GM13976 (cell line): ENCODE measurements at regions of chr1 and their contacts with region 1.

Region 1: GRCh38 chr1:194295685-194296084 is 1109.3 kb upstream of the B3GALT2 start:
- DNase-seq: peak; percentile 20
- CTCF ChIP-seq: peak; percentile 73

Region 2: GRCh38 chr1:193406901-193407300 is 888.8 kb before region 1 on chr1:
- in situ Hi-C with region 1: loop called (anchors 25 kb)
- DNase-seq: peak; percentile 32
- CTCF ChIP-seq: peak; percentile 65

Region 3: DNA sequence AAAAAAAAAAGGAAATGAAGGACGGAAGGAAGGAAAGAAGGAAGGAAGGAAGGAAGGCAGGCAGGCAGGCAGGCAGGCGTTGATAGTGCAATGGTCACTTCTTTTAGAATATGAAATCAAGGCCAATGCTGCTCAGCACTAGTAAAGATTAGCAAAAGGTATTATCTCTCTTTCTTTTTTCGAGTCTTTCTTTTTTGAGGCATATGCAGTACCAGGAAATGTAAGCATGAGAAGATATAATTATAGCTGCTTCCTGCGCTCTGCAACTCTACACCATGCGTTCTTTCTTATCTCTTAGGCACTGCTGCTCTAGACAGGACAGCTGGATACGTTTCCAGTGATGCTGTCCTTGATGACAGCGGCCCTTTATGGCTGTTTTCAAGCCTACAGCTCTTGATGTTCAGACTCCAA is 403.2 kb after region 1 on chr1:
- in situ Hi-C with region 1: no loop called
- DNase-seq: no peak
- CTCF ChIP-seq: no peak

Region 4: DNA sequence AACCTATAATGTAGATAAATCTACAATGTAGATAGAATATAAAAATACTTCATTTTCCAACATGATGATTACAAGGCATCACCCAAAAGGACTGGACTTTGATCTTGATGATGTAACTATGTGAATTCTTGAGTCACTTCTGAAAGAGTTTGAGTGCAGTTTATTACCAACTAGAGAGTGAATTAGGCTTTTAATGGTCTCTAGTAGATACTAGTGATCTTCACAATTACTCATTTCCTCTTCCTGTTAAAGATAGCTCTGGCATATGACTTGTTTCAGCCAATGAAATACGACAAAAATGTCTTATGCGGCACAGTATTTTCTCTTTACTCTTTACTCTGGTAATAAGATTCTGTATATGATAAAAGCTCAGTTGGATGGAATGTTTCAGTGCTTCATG is 478.9 kb after region 1 on chr1:
- in situ Hi-C with region 1: no loop called
- DNase-seq: no peak
- CTCF ChIP-seq: no peak